Panc1 (cell line): ENCODE measurements at regions of chr7 and their contacts with region 1.

Region 1: GRCh38 chr7:207418-208129 is 15.2 kb downstream of the FAM20C start:
- DNase-seq: no peak
- ATAC-seq: no peak
- H3K4me3 ChIP-seq: no peak overlapping the region
- H3K27ac ChIP-seq: no peak overlapping the region
- H3K4me1 ChIP-seq: no peaks in the 10 kb centered on the region
- H3K27me3 ChIP-seq: no peaks in the 10 kb centered on the region
- CTCF ChIP-seq: no peak

Region 2: DNA sequence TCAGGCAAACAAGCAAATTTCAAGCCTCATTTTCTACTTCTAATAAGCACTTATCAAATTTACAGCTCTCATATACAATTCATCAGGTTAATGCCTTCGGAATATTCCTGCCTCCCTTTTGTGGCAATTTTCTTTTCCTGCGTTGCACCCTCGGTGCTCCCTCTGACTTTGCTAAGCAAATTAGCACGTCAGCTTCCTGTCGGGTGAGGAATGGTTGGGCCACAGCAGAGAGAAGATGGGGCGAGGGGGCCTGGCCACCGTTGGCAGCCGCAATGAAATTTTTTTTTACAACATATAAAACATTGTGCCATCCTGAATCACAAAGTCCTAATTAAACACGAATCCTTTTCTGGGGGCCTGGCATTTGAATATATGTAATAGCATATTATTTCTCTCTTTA is 1490.6 kb after region 1 on chr7:
- CTCF ChIA-PET with region 1: interaction called, 10 read pairs
- POLR2A ChIA-PET with region 1: no interaction called
- in situ Hi-C with region 1: no loop called
- intact Hi-C with region 1: no loop called
- DNase-seq: no peak
- ATAC-seq: no peak
- H3K4me3 ChIP-seq: no peak overlapping the region
- H3K27ac ChIP-seq: no peak overlapping the region
- H3K4me1 ChIP-seq: peaks cover 10% of the 10 kb centered on the region; the same call in 1 of the 2 replicates
- H3K27me3 ChIP-seq: no peaks in the 10 kb centered on the region
- CTCF ChIP-seq: no peak